ENCODE measurements at regions of chr7 and their contacts with region 1.

Region 1: GRCh38 chr7:140517546-140518369 is 38.5 kb upstream of the MKRN1 start:
- DNase-seq: peak; percentile 93 to 94
- ATAC-seq: peak; percentile 98 to 99
- H3K4me3 ChIP-seq: no peak overlapping the region
- H3K27ac ChIP-seq: peak overlapping the region; percentile 50 to 72; a peak in 5 of 6 replicates
- H3K4me1 ChIP-seq: peaks cover 6% of the 10 kb centered on the region; the same call in 2 of the 3 replicates
- CTCF ChIP-seq: peak; percentile 92
- EP300 ChIP-seq: no peak
- POLR2A ChIP-seq: no peak
- RAD21 ChIP-seq: peak; percentile 99

Region 2: GRCh38 chr7:140506788-140507464 is 10.8 kb before region 1 on chr7:
- CTCF ChIA-PET with region 1: interaction called, 27 read pairs
- POLR2A ChIA-PET with region 1: no interaction called
- DNase-seq: peak in 1 of 2 experiments; percentile 27
- ATAC-seq: peak; percentile 74 to 84
- H3K4me3 ChIP-seq: no peak overlapping the region
- H3K27ac ChIP-seq: peak overlapping the region in 1 of 2 experiments; percentile 18; a peak in 1 of 6 replicates
- H3K4me1 ChIP-seq: 0 out of 3 replicates have a peak, but pooled peaks cover 3% of the 10 kb centered on the region
- CTCF ChIP-seq: no peak
- EP300 ChIP-seq: no peak
- POLR2A ChIP-seq: no peak
- RAD21 ChIP-seq: no peak

Region 3: GRCh38 chr7:140541513-140542227 is 23.9 kb after region 1 on chr7:
- CTCF ChIA-PET with region 1: interaction called, 53 read pairs
- POLR2A ChIA-PET with region 1: interaction called, 4 read pairs
- DNase-seq: peak; percentile 91 to 95
- ATAC-seq: peak; percentile 96 to 97
- H3K4me3 ChIP-seq: peak overlapping the region; percentile 14; the same call in 2 of the 3 replicates
- H3K27ac ChIP-seq: peak overlapping the region; percentile 90 to 94
- H3K4me1 ChIP-seq: peaks cover 25% of the 10 kb centered on the region
- CTCF ChIP-seq: no peak
- EP300 ChIP-seq: peak in 1 of 2 experiments; percentile 47; a peak in 1 of 5 replicates
- POLR2A ChIP-seq: no peak
- RAD21 ChIP-seq: 0 out of 5 replicates have a peak, but pooled peaks of 1 of the 2 experiments have one; percentile 28

Region 4: GRCh38 chr7:140596519-140597427 is 79.0 kb after region 1 on chr7:
- CTCF ChIA-PET with region 1: interaction called, 11 read pairs
- POLR2A ChIA-PET with region 1: no interaction called
- DNase-seq: no peak
- ATAC-seq: no peak
- H3K4me3 ChIP-seq: no peak overlapping the region
- H3K27ac ChIP-seq: no peak overlapping the region
- H3K4me1 ChIP-seq: peaks cover 7% of the 10 kb centered on the region; the same call in 1 of the 3 replicates
- CTCF ChIP-seq: no peak
- EP300 ChIP-seq: no peak
- POLR2A ChIP-seq: no peak
- RAD21 ChIP-seq: no peak

Region 5: GRCh38 chr7:140619176-140619575 is 101.4 kb after region 1 on chr7:
- CTCF ChIA-PET with region 1: interaction called, 17 read pairs
- POLR2A ChIA-PET with region 1: no interaction called
- DNase-seq: no peak
- ATAC-seq: no peak
- H3K4me3 ChIP-seq: no peak overlapping the region
- H3K27ac ChIP-seq: no peak overlapping the region
- H3K4me1 ChIP-seq: peaks cover 6% of the 10 kb centered on the region; the same call in 1 of the 3 replicates
- CTCF ChIP-seq: no peak
- EP300 ChIP-seq: no peak
- POLR2A ChIP-seq: no peak
- RAD21 ChIP-seq: no peak

Region 6: GRCh38 chr7:140640727-140641523 is 123.2 kb after region 1 on chr7 and contains the start of gene DENND2A:
- CTCF ChIA-PET with region 1: interaction called, 493 read pairs
- POLR2A ChIA-PET with region 1: interaction called, 3 read pairs
- DNase-seq: no peak
- ATAC-seq: peak; percentile 38 to 55
- H3K4me3 ChIP-seq: peak within 1 kb of the TSS; percentile 63
- H3K27ac ChIP-seq: peak within 1 kb of the TSS; percentile 69 to 95
- H3K4me1 ChIP-seq: no peaks in the 10 kb centered on the region; the same call in 2 of the 3 replicates
- CTCF ChIP-seq: no peak
- EP300 ChIP-seq: no peak
- POLR2A ChIP-seq: no peak
- RAD21 ChIP-seq: no peak
- polyA plus RNA-seq, gene DENND2A: 0.61 and 0.63 TPM in 2 replicates

Region 7: GRCh38 chr7:140653319-140654108 is 135.8 kb after region 1 on chr7:
- CTCF ChIA-PET with region 1: interaction called, 493 read pairs
- POLR2A ChIA-PET with region 1: interaction called, 9 read pairs
- DNase-seq: peak; percentile 73 to 81
- ATAC-seq: peak; percentile 86 to 93
- H3K4me3 ChIP-seq: no peak overlapping the region
- H3K27ac ChIP-seq: peak overlapping the region; percentile 15 to 41; a peak in 3 of 6 replicates
- H3K4me1 ChIP-seq: peaks cover 4% of the 10 kb centered on the region; the same call in 1 of the 3 replicates
- CTCF ChIP-seq: peak; percentile 96
- EP300 ChIP-seq: no peak
- POLR2A ChIP-seq: no peak
- RAD21 ChIP-seq: peak; percentile 96 to 99

Measured in A549 (cell line).